ENCODE measurements at regions of chr17 and their contacts with region 1.

Region 1: DNA sequence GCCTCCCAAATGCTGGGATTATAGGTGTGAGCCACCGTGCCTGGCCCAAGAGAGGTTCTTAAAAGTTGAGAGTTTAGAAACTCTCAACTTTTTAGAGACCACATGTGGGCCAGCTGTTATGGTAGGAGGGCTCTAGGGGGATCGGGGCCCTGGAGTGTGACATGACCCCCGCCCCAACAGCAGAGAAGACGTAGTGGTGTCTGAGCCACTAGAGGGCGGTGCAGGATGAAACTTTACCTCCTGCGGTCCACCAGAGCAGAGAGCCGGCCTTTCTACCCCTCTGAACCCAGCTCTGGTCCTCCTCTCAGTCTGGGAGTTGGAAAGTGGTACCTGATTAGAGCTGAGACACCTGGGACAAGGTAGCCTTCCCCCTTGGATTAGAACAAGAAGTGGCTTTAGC is 7.4 kb downstream of the CDK5RAP3 start:
- DNase-seq: peak; percentile 95
- H3K4me3 ChIP-seq: no peak overlapping the region; a peak in 1 of 4 replicates
- H3K27ac ChIP-seq: peak overlapping the region in 1 of 2 experiments; percentile 98; a peak in 2 of 4 replicates
- H3K4me1 ChIP-seq: peaks cover 0 to 49% of the 10 kb centered on the region in 2 experiments; a peak in 2 of 4 replicates
- H3K27me3 ChIP-seq: no peaks in the 10 kb centered on the region
- CTCF ChIP-seq: peak; percentile 99
- EP300 ChIP-seq: no peak
- RAD21 ChIP-seq: peak; percentile 99

Region 2: DNA sequence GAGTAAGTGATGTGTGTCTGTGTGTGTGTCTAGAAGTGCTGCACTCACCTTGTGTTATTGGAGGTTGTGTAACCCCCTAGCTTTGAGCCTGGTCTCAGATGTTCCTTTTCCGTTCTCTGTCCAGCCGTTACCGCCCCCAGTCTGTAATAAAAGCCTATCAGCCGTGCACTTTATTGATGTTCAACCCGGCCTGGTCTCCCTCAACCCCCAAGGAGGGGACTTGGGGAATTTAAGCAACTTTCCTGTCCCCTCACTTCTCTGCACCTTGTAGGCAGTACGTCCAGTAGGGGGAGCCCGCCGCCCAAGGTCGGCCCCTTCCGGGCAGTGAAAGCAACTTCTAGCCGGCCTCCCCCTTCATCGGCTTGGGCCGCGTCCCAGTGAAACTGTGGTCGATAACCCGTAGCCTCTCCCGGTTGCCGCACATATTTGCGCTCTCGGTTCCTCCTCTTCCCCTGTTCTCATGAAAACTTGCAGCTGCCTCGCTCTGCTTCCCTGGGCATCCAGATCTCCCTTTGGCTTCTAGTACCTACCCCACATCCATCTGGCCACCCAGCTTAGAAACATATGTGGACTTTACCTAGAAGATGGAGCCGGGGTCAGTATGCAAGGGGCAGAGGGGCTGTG is 29.1 kb before region 1 on chr17:
- CTCF ChIA-PET with region 1: interaction called, 1,216 read pairs
- POLR2A ChIA-PET with region 1: no interaction called
- DNase-seq: peak; percentile 90
- H3K4me3 ChIP-seq: peak overlapping the region; percentile 28 to 29
- H3K27ac ChIP-seq: peak overlapping the region; percentile 29 to 75; a peak in 3 of 4 replicates
- H3K4me1 ChIP-seq: peaks cover 4 to 11% of the 10 kb centered on the region in 2 experiments; a peak in 3 of 4 replicates
- H3K27me3 ChIP-seq: no peaks in the 10 kb centered on the region
- CTCF ChIP-seq: peak; percentile 100
- EP300 ChIP-seq: no peak
- RAD21 ChIP-seq: peak; percentile 91

Region 3: DNA sequence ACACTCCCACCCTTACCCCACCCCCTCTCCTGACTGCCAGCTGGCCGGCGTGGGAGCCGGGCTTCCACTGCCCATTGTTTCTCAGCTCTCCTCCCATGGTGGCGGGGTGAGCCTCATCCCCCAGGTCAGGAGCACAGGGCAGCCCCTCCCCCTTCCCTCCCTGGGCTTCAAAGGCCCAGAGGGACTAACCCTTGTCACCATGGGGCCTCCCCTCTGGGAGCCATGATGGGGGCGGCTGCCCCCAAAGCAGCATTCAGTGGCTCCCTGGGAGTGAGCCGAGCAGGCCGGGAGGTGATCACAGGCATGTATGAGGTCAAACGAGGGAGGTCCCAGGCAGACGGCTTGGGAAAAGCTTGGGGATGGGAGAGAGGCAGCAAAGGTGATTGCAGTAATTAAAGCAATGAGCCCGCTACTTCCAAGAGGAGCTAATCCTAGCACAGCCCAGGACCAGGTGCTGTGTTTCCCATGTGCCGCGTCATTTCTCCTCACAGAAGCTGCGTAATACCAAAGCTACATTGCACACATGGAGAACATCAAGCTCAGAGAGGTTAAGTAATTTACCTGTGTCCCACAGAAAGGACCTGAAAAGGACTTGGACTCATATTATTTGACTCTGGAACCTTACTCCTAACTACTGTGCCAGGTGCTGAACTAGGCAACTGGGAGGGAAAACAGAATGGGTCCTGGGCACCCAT is 17.1 kb after region 1 on chr17:
- CTCF ChIA-PET with region 1: interaction called, 479 read pairs
- POLR2A ChIA-PET with region 1: interaction called, 28 read pairs
- DNase-seq: no peak
- H3K4me3 ChIP-seq: no peak overlapping the region
- H3K27ac ChIP-seq: peak overlapping the region in 1 of 2 experiments; percentile 94; a peak in 2 of 4 replicates
- H3K4me1 ChIP-seq: peaks cover 9 to 76% of the 10 kb centered on the region in 2 experiments; a peak in 3 of 4 replicates
- H3K27me3 ChIP-seq: no peaks in the 10 kb centered on the region
- CTCF ChIP-seq: no peak
- EP300 ChIP-seq: no peak
- RAD21 ChIP-seq: no peak

Region 4: GRCh38 chr17:48011405-48012150 is 33.3 kb after region 1 on chr17:
- CTCF ChIA-PET with region 1: interaction called, 1,752 read pairs
- POLR2A ChIA-PET with region 1: interaction called, 189 read pairs
- DNase-seq: peak; percentile 59
- H3K4me3 ChIP-seq: peak overlapping the region; percentile 42 to 51
- H3K27ac ChIP-seq: peak overlapping the region in 1 of 2 experiments; percentile 100; a peak in 3 of 4 replicates
- H3K4me1 ChIP-seq: peaks cover 15 to 54% of the 10 kb centered on the region in 2 experiments
- H3K27me3 ChIP-seq: no peaks in the 10 kb centered on the region
- CTCF ChIP-seq: peak; percentile 57
- EP300 ChIP-seq: no peak
- RAD21 ChIP-seq: peak; percentile 68

Region 5: GRCh38 chr17:48062273-48062672 is 83.9 kb after region 1 on chr17:
- CTCF ChIA-PET with region 1: no interaction called
- POLR2A ChIA-PET with region 1: no interaction called
- DNase-seq: no peak
- H3K4me3 ChIP-seq: no peak overlapping the region
- H3K27ac ChIP-seq: no peak overlapping the region
- H3K4me1 ChIP-seq: peaks cover 0 to 2% of the 10 kb centered on the region in 2 experiments; a peak in 1 of 4 replicates
- H3K27me3 ChIP-seq: no peaks in the 10 kb centered on the region
- CTCF ChIP-seq: no peak
- EP300 ChIP-seq: no peak
- RAD21 ChIP-seq: no peak